Pancreas (tissue), 10 donors: ENCODE measurements at regions of chr17 and their contacts with region 1.

Region 1: GRCh38 chr17:12545877-12546513 is 119.7 kb upstream of the MYOCD start:
- DNase-seq: peak in 3 of 6 donors; percentile 17 to 45 (median 22)
- ATAC-seq: peak in 3 of 4 donors; percentile 85 to 95 (median 85)
- H3K4me3 ChIP-seq: no peak overlapping the region
- H3K27ac ChIP-seq: no peak overlapping the region
- H3K4me1 ChIP-seq: no peaks in the 10 kb centered on the region
- H3K27me3 ChIP-seq: no peaks in the 10 kb centered on the region
- CTCF ChIP-seq: peak; percentile 36 to 64 (median 58)

Region 2: GRCh38 chr17:12667299-12667958 is 121.4 kb after region 1 on chr17:
- intact Hi-C with region 1: loop called in 1 of 3 experiments (anchors 10 kb)
- DNase-seq: no peak
- ATAC-seq: peak in 3 of 4 donors; percentile 62 to 75 (median 64)
- H3K4me3 ChIP-seq: no peak overlapping the region
- H3K27ac ChIP-seq: no peak overlapping the region
- H3K4me1 ChIP-seq: peaks cover 0 to 4% (median 0%) of the 10 kb centered on the region in 3 donors
- H3K27me3 ChIP-seq: peaks cover 0 to 20% (median 0%) of the 10 kb centered on the region in 4 donors
- CTCF ChIP-seq: peak in 1 of 4 donors; percentile 12

Region 3: GRCh38 chr17:12744298-12744697 is 198.3 kb after region 1 on chr17:
- intact Hi-C with region 1: loop called in 1 of 3 experiments (anchors 5 kb)
- DNase-seq: no peak
- ATAC-seq: peak in 2 of 4 donors; percentile 28 to 37
- H3K4me3 ChIP-seq: no peak overlapping the region
- H3K27ac ChIP-seq: peak overlapping the region in 1 of 4 donors; percentile 47
- H3K4me1 ChIP-seq: peaks cover 7 to 12% (median 9%) of the 10 kb centered on the region in 3 donors
- H3K27me3 ChIP-seq: no peaks in the 10 kb centered on the region
- CTCF ChIP-seq: no peak

Region 4: DNA sequence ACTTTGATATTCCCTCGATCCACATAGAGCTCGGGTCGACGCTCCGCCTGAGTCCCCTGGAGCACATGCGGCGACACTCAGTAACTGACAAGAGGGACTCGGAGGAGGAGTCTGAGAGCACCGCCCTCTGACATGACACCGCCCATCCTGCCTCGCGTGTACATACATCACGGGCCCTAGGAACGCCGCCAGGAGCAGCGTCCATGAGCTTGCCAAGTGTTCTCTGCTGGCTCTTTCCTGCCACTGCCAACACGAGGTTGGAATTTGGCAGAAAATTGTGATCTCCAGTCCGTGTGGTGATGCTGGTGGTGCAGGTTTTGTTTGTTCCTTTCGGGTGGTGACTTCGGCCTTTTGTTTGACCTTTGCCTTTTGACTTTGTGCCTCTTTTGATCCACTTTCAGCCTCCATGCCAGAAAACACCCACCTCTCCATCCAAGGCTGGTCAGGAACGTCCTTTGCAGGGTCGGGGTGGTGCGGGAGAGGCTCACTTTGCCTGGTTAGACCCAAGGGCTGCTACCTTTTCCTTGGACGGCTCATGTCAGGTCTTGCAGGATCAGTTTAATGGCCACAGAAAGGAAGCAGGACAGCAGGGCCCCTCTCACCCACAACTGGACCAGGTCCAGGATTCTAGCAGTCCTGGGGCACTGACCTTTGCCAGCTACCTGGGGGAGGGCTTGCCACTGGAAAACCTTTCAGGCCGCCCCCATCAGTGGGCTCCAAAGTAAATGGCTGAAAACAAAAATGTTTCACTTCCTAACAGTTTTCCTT is 444.2 kb after region 1 on chr17:
- intact Hi-C with region 1: loop called in 1 of 3 experiments (anchors 10 kb)
- DNase-seq: peak in 1 of 6 donors; percentile 6
- ATAC-seq: peak in 1 of 4 donors; percentile 47
- H3K4me3 ChIP-seq: no peak overlapping the region
- H3K27ac ChIP-seq: no peak overlapping the region
- H3K4me1 ChIP-seq: no peaks in the 10 kb centered on the region
- H3K27me3 ChIP-seq: no peaks in the 10 kb centered on the region
- CTCF ChIP-seq: no peak